Stomach (tissue), 19 donors: ENCODE measurements at regions of chr6 and their contacts with region 1.

Region 1: GRCh38 chr6:34414999-34415858 is 10.6 kb downstream of the RPS10 start:
- DNase-seq: peak; percentile 58 to 90
- H3K4me3 ChIP-seq: no peak overlapping the region
- H3K27ac ChIP-seq: peak overlapping the region in 4 of 5 donors; percentile 52 to 75 (median 60)
- H3K4me1 ChIP-seq: peaks cover 5 to 29% (median 17%) of the 10 kb centered on the region in 4 donors
- H3K27me3 ChIP-seq: no peaks in the 10 kb centered on the region
- CTCF ChIP-seq: peak in 5 of 7 experiments; percentile 52 to 86 (median 71)
- EP300 ChIP-seq: no peak
- POLR2A ChIP-seq: peak in 1 of 4 donors; percentile 4

Region 2: GRCh38 chr6:34248727-34249551 is 166.3 kb before region 1 on chr6 and contains the start of gene SMIM29:
- intact Hi-C with region 1: loop called (anchors 5 kb)
- DNase-seq: peak; percentile 97 to 98
- H3K4me3 ChIP-seq: peak within 1 kb of the TSS; percentile 63 to 89 (median 66)
- H3K27ac ChIP-seq: peak within 1 kb of the TSS; percentile 86 to 94 (median 89)
- H3K4me1 ChIP-seq: peaks cover 22 to 49% (median 37%) of the 10 kb centered on the region in 4 donors
- H3K27me3 ChIP-seq: no peaks in the 10 kb centered on the region
- CTCF ChIP-seq: peak in 5 of 7 experiments; percentile 91 to 99 (median 98)
- EP300 ChIP-seq: no peak
- POLR2A ChIP-seq: peak in 2 of 4 donors; percentile 24 to 57
- total RNA-seq, gene SMIM29: 2.8 to 49.1 (median 5.3) TPM

Region 3: DNA sequence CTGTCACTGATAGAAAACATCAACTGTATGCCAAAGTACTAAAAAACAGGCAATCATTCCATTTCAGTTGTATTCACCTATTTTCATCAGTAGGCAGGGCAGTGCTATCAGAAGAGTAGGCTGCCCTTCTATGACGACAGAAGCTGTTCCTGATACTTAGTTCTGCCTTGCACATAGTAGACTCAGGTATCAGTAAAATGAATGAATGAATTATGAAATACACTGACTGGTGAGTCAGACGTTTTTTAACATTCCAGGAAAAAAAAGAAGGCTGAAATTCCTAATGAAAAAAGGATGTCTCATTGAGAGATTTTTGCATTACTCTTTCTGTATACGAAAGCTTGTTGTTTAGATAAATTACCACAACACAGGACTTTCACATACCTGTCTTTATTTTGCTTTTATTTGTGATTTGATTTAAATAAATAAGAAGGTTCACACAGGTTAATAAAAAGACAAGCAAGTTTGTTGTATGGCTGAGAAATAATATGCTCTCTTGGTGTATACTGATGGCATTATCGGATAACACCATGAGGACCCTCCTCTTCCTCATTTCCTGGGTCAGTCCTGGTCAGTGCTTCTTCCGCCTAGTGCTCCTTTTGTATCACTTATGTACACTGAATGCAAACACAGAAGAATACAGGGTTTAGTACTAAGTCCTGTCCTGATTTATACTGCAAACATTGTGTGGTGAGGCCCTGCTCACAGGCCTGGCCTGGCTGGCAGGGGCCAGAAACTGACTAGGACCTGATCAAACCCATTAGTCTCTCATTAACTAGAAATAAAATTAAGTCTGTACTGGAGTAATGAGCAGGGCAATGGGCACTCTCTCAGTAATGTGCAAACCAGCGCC is 180.3 kb after region 1 on chr6:
- intact Hi-C with region 1: no loop called
- DNase-seq: no peak
- H3K4me3 ChIP-seq: no peak overlapping the region
- H3K27ac ChIP-seq: peak overlapping the region in 3 of 5 donors; percentile 11 to 36 (median 14)
- H3K4me1 ChIP-seq: peaks cover 22 to 79% (median 54%) of the 10 kb centered on the region in 4 donors
- H3K27me3 ChIP-seq: no peaks in the 10 kb centered on the region
- CTCF ChIP-seq: no peak
- EP300 ChIP-seq: no peak
- POLR2A ChIP-seq: no peak